ENCODE measurements at regions of chr7 and their contacts with region 1.

Region 1: DNA sequence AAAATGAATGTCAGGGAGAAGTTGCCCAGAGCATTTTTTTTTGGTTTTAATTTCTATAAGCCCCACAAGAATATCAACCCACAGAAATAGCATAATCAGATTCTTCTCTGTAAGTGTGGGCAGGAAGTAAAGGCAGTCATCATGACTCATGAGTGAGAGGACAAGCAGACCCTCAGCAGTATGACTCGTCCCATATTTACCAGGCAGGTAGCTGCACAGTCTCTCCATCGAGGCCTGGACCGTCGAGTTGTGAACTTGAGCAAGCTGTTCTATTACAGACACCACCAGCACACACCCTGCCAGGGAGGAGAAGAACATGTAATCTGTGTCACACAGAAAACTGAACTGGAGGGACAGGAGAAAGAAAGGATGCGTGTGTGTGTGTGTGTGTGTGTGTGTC is 37.8 kb downstream of the AOAH start:
- DNase-seq: peak; percentile 67
- ATAC-seq: peak; percentile 78
- H3K4me3 Mint-ChIP-seq: no peak overlapping the region
- H3K27ac Mint-ChIP-seq: peak overlapping the region; percentile 69
- H3K4me1 Mint-ChIP-seq: peaks cover 80% of the 10 kb centered on the region
- H3K27me3 Mint-ChIP-seq: no peaks in the 10 kb centered on the region

Region 2: DNA sequence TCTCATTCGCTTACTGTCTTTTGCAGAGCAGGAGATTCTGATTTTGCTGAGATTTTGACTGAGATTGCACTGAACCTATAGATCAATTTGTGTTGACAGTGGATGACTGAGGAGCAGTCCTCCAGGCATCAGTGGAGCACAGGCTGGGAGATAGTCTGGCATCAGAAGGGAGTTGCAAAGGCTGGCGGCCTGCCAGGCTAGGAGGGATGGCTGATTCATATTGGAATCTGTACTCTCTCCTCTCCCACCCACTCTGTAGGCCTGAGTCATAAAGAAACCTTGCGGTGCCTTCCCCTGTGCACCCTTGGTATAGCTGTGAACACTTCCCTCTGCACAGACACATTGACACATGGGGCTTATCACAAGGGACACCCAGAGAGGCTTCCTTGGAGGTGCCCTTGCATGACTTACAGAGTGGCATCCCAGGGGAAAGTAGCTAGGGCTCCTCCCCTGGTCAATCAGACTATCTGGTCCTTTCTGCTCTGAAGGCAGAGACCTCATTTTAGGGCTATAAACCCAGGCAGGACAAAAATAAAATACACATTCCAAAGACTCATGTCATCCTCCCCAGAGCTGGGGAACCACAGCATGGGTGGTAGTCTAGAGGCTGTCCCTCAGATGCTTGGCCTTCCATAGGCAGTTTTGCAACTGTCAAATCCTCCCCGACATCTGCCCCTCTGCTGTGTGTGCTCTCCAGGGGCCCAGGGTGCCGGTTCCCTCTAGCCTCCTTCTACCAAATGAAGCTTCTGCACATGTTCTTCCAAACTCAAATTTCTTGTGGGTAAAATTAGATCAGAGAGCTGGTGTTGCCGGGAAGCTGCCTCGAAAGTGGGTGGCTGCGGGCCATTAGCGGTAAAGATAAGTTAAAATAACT is 570.8 kb before region 1 on chr7:
- CTCF ChIA-PET with region 1: no interaction called
- POLR2A ChIA-PET with region 1: no interaction called
- intact Hi-C with region 1: loop called in 1 of 2 experiments (anchors 5 kb)
- DNase-seq: peak; percentile 96
- ATAC-seq: peak; percentile 99
- H3K4me3 Mint-ChIP-seq: no peak overlapping the region
- H3K27ac Mint-ChIP-seq: peak overlapping the region; percentile 59
- H3K4me1 Mint-ChIP-seq: peaks cover 35% of the 10 kb centered on the region
- H3K27me3 Mint-ChIP-seq: peaks cover 27% of the 10 kb centered on the region

Region 3: DNA sequence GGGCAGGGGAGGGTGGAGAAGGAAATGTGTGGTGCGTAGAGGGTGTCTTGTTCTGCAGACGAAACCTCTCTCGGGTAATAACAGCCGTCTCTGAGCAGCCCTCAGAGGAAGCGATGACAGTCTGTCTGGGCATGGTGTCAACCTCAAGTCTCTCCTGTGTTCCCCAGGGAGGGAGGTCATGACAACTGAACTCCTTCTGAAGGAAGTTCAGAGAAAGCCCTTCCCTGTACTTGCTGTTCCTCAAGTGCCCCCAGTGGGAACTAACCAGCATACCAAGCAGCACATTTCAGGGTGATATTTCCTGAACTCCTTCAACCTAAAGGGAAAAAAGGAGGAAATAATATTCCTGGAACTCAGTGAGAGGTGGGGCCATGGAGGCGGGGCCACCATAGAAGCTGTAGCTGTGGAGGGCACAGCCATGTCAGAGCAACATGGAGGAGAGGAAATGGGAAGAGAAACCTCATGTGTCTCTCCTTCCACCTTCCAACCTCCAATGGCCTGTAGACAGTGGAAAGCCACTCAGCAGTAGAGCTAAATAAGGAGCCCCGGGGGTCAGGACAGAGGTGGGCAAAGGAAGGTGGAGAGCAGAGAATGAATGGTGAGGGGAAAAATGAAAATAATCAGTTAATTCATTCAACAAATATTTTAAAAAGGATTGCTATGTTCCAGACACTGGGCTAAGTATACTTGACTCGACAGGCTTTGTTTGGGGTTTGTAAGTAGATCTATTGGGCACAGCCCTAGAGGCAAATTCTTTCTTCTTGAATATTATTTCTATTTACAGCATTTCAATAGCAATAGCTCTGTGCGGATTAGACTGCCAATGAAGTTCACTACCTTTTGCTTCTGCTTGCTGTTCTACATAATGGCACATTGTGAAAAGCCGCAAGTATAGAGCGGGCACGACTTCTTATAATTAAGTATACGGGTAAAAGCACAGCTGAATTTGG is 98.8 kb after region 1 on chr7:
- CTCF ChIA-PET with region 1: interaction called, 4 read pairs
- POLR2A ChIA-PET with region 1: no interaction called
- intact Hi-C with region 1: loop called in 1 of 2 experiments (anchors 2 kb)
- DNase-seq: peak; percentile 67
- ATAC-seq: peak; percentile 83
- H3K4me3 Mint-ChIP-seq: no peak overlapping the region
- H3K27ac Mint-ChIP-seq: peak overlapping the region; percentile 56
- H3K4me1 Mint-ChIP-seq: peaks cover 78% of the 10 kb centered on the region
- H3K27me3 Mint-ChIP-seq: no peaks in the 10 kb centered on the region

Region 4: DNA sequence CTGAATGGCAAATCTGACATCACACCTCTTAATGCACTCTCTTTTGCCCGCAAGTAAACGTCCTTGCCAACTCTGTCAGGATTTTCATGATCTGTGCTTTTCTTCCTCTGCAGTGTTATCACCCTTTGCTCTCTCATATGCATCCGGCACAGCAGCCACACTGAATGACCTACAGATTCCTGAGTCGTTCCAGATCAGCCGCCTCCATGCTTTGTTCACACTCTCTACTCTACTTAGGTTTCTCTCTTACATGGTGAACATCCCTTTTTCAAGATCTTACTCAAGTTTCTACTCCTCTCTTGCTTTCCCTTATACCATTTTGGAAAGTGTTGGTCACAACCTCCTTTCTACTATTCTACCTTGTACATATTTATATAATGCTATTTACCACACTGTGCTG is 165.5 kb after region 1 on chr7:
- CTCF ChIA-PET with region 1: interaction called, 3 read pairs
- POLR2A ChIA-PET with region 1: no interaction called
- intact Hi-C with region 1: loop called in 1 of 2 experiments (anchors 5 kb)
- DNase-seq: peak; percentile 52
- ATAC-seq: peak; percentile 87
- H3K4me3 Mint-ChIP-seq: no peak overlapping the region
- H3K27ac Mint-ChIP-seq: peak overlapping the region; percentile 82
- H3K4me1 Mint-ChIP-seq: peaks cover 22% of the 10 kb centered on the region
- H3K27me3 Mint-ChIP-seq: no peaks in the 10 kb centered on the region

Region 5: GRCh38 chr7:37031571-37032257 is 345.2 kb after region 1 on chr7:
- CTCF ChIA-PET with region 1: no interaction called
- POLR2A ChIA-PET with region 1: no interaction called
- intact Hi-C with region 1: loop called in 1 of 2 experiments (anchors 1 kb)
- DNase-seq: peak; percentile 73
- ATAC-seq: peak; percentile 90
- H3K4me3 Mint-ChIP-seq: no peak overlapping the region
- H3K27ac Mint-ChIP-seq: peak overlapping the region; percentile 52
- H3K4me1 Mint-ChIP-seq: peaks cover 77% of the 10 kb centered on the region
- H3K27me3 Mint-ChIP-seq: no peaks in the 10 kb centered on the region

Region 6: DNA sequence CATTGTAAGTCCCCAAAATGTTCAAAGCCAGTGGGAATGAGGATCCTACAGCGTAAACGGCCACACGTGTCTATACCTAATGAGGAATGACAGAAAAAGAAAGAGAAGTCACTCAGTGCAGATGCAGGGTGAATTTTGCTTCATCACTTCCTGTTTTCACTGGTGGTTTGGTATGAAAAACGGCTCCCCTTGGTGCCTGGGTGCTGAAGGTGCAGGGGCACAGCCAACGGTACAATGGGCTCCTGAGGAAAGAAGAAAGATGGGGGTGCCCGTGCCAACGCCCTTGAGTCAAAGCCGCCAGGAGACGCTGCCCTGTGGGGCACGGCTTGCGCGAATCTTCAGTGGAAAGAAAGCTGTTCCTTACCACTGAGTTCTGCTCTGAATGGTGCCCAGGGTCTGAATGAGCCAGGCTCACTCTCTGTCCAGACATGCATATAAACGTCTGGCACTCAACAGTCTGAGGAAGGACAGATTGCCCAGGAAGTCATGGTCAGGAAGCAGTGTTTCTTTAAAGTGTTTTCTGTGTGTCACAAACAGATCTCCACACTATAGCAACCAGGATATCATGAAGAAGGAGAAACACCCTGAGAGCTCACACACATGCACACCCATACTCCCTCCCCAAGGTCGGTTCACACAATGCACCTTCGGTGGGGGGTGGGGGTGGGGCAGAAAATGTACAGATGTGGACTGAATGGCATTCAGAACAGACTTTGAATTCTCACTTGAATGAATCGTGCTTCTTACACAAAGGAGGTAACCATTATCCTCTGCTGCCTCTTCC is 656.4 kb after region 1 on chr7:
- CTCF ChIA-PET with region 1: no interaction called
- POLR2A ChIA-PET with region 1: no interaction called
- intact Hi-C with region 1: loop called in 1 of 2 experiments (anchors 5 kb)
- DNase-seq: peak; percentile 85
- ATAC-seq: peak; percentile 83
- H3K4me3 Mint-ChIP-seq: peak overlapping the region; percentile 89
- H3K27ac Mint-ChIP-seq: peak overlapping the region; percentile 95
- H3K4me1 Mint-ChIP-seq: peaks cover 77% of the 10 kb centered on the region
- H3K27me3 Mint-ChIP-seq: no peaks in the 10 kb centered on the region

Region 7: DNA sequence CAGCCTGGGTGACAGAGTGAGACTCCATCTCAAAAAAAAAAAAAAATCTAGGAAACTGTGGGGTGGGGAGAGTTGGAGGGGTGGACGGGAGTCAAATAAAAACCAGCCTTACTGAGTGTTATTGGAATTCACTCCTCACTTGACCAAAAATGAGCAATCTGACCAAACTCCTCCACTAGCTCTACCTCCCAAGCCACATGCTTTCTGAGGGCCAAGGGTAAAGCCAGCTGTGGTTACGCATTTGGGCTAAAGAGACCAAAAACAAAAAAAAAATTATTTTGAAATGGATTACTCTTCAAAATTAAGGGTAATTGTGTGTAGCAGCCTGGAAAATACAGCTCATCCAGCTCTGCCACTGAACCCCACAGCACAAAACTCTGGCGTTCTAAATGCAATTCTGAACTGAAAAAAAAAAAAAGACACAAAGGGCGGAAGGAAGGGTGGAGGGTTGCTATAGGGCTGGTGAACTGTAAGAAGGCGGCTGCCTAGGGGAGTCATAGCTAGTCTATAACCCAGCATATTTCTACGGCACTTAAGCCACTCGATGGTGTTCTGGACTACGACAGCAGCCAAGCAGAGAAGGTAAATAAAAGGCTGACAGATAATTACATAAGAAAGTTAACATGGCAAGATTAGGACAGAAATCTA is 754.4 kb after region 1 on chr7:
- CTCF ChIA-PET with region 1: no interaction called
- POLR2A ChIA-PET with region 1: no interaction called
- intact Hi-C with region 1: loop called in 1 of 2 experiments (anchors 5 kb)
- DNase-seq: peak; percentile 67
- ATAC-seq: peak; percentile 76
- H3K4me3 Mint-ChIP-seq: peak overlapping the region; percentile 61
- H3K27ac Mint-ChIP-seq: peak overlapping the region; percentile 86
- H3K4me1 Mint-ChIP-seq: peaks cover 89% of the 10 kb centered on the region
- H3K27me3 Mint-ChIP-seq: no peaks in the 10 kb centered on the region

Measured in activated CD4-positive, alpha-beta T cell treated with anti-CD3 and anti-CD28 coated beads for 36 hours (primary cell).